Left colon (tissue), 2 donors: ENCODE measurements at regions of chr5 and their contacts with region 1.

Region 1: GRCh38 chr5:38441453-38442246 is 114.8 kb downstream of the LIFR start:
- DNase-seq: peak; percentile 74 to 88
- ATAC-seq: peak; percentile 96

Region 2: GRCh38 chr5:38540314-38540713 is 98.7 kb after region 1 on chr5:
- intact Hi-C with region 1: loop called in 1 of 2 experiments (anchors 10 kb)
- DNase-seq: no peak
- ATAC-seq: no peak

Region 3: GRCh38 chr5:38809388-38810359 is 368.0 kb after region 1 on chr5:
- intact Hi-C with region 1: loop called (anchors 2 to 10 kb)
- DNase-seq: peak; percentile 61 to 74
- ATAC-seq: peak; percentile 80